Sigmoid colon (tissue), 7 donors: ENCODE measurements at regions of chr2 and their contacts with region 1.

Region 1: GRCh38 chr2:70919672-70920366 is 15.9 kb upstream of the ATP6V1B1 start:
- DNase-seq: peak; percentile 80
- H3K4me3 ChIP-seq: no peak overlapping the region
- H3K27ac ChIP-seq: no peak overlapping the region
- H3K4me1 ChIP-seq: no peaks in the 10 kb centered on the region
- H3K27me3 ChIP-seq: peaks cover 0 to 44% (median 0%) of the 10 kb centered on the region in 3 donors
- CTCF ChIP-seq: peak; percentile 31 to 76 (median 68)
- EP300 ChIP-seq: no peak
- POLR2A ChIP-seq: no peak

Region 2: DNA sequence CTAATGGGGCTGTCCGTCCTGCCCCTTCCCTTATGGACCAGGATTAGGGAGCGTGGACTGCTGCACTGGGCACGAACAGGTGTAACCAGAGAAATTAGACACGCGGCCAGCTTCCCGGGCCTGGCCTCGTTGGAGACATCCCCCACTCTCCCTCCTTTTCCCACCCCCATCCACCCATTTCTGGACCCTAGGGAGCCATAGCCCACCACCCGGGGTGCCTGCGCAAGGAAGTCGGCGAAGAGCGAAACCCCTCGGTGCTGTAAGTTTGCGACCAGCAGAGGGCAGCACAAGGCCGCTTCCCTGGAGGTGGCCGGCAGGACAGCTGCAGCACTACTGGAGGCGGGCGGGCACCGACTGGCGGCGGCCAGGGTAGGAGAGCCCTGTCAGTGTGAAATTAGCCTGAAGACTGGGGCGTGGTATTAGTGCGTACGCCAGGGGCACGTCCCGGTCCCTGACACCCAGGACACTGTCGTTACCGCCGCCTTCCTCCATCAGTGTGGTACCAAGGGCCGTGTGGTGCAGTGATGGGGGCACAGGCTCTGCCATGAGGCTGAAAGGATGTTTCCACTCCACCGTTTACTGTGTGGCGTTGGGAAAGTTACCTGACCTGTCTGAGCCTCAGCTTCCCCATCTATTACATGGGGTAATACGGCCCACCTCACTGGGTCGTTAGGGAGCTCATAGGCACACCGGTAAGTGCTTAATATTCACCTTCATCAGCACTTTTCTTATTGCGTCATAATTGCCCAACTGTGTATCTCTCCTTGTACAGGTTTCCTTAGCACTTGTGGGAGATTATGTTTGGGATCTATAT is 48.2 kb before region 1 on chr2:
- intact Hi-C with region 1: loop called (anchors 2 kb)
- DNase-seq: peak; percentile 88
- H3K4me3 ChIP-seq: peak overlapping the region in 1 of 4 donors; percentile 26
- H3K27ac ChIP-seq: no peak overlapping the region
- H3K4me1 ChIP-seq: peaks cover 0 to 10% (median 8%) of the 10 kb centered on the region in 4 donors
- H3K27me3 ChIP-seq: peaks cover 7 to 54% (median 15%) of the 10 kb centered on the region in 3 donors
- CTCF ChIP-seq: peak; percentile 70 to 85 (median 81)
- EP300 ChIP-seq: no peak
- POLR2A ChIP-seq: no peak

Region 3: GRCh38 chr2:71130113-71130904 is 210.5 kb after region 1 on chr2 and contains the starts of genes MCEE and MPHOSPH10:
- intact Hi-C with region 1: no loop called
- DNase-seq: peak; percentile 94
- H3K4me3 ChIP-seq: peak within 1 kb of the TSS; percentile 68 to 87 (median 80)
- H3K27ac ChIP-seq: peak within 1 kb of the TSS; percentile 88 to 95 (median 92)
- H3K4me1 ChIP-seq: peaks cover 0 to 37% (median 29%) of the 10 kb centered on the region in 4 donors
- H3K27me3 ChIP-seq: no peaks in the 10 kb centered on the region
- CTCF ChIP-seq: no peak
- EP300 ChIP-seq: no peak
- POLR2A ChIP-seq: peak; percentile 29 to 52
- total RNA-seq, gene MCEE: 8.1 to 23.5 (median 15.5) TPM
- total RNA-seq, gene MPHOSPH10: 21.0 to 27.1 (median 24.0) TPM